ENCODE measurements at regions of chr13 and their contacts with region 1.

Region 1: GRCh38 chr13:111367340-111367739 is 46.9 kb downstream of the TEX29 start:
- DNase-seq: no peak
- H3K4me3 ChIP-seq: no peak overlapping the region
- CTCF ChIP-seq: no peak

Region 2: GRCh38 chr13:111262715-111263114 is 104.6 kb before region 1 on chr13:
- in situ Hi-C with region 1: no loop called
- DNase-seq: no peak
- H3K4me3 ChIP-seq: no peak overlapping the region
- CTCF ChIP-seq: no peak

Region 3: DNA sequence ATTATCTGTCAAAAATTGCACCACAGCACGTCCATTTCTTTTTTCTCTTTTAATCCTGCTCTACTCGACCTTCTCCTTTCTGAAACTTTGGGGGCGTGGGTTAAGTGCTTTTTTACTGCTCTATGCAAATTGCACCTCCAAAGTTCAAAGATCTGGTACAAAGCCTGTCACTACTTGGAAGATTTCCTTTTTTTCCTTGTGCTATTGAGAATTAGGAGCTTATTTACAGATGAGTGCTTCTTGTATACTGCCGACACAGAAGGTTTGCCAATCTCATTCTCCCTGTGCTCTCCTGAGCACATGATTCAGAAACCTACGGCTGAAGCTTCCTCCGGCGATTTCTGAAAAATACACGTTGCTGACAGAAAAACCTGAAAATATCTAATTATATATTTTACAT is 47.9 kb after region 1 on chr13:
- in situ Hi-C with region 1: loop called (anchors 5 kb)
- DNase-seq: no peak
- H3K4me3 ChIP-seq: no peak overlapping the region
- CTCF ChIP-seq: no peak

Region 4: GRCh38 chr13:112097770-112098169 is 730.4 kb after region 1 on chr13:
- in situ Hi-C with region 1: no loop called
- DNase-seq: no peak
- H3K4me3 ChIP-seq: no peak overlapping the region
- CTCF ChIP-seq: no peak

Measured in astrocyte of the cerebellum (primary cell).